ENCODE measurements at regions of chr10 and their contacts with region 1.

Region 1: DNA sequence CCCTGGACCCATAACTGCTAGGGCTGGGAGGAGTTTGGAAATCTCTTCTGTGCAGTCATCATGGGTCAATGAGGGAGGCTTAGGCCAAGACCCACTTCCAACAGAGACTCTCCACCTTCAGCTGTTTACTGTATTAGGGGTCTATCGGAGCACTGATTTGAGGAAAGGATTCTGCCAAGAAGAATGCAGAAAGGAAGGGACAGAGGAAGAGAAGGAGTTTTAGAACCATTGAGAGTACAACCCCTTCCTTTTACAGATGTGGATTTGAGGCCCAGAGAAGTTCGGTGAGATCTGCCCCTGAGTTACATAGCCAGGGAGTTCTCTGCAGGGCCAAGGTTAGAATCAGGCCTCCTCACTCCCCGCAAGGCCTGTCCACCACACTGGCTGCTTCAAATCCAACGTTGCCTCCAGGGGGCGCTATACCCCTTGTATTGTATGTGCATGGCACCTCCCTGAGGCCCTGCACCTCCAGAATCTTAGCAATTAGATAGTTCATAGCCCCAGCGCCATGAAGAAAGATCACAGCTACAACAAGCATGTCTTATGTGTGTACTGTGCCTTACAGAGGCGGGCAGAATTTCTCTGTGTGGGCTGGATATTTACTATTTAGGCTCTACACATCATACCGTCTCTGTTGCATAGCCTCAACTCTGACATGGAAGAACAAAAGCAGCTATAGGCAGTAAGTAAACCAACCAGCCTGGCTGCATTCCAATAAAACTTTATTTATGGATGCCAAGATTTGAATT is 246.8 kb downstream of the SKIDA1 start:
- DNase-seq: peak; percentile 63
- H3K4me3 ChIP-seq: no peak overlapping the region; a peak in 1 of 4 replicates
- H3K27ac ChIP-seq: no peak overlapping the region
- H3K4me1 ChIP-seq: peaks cover 0 to 5% of the 10 kb centered on the region in 2 experiments; a peak in 1 of 4 replicates
- H3K27me3 ChIP-seq: no peaks in the 10 kb centered on the region
- CTCF ChIP-seq: peak; percentile 90
- EP300 ChIP-seq: no peak
- RAD21 ChIP-seq: peak; percentile 91

Region 2: DNA sequence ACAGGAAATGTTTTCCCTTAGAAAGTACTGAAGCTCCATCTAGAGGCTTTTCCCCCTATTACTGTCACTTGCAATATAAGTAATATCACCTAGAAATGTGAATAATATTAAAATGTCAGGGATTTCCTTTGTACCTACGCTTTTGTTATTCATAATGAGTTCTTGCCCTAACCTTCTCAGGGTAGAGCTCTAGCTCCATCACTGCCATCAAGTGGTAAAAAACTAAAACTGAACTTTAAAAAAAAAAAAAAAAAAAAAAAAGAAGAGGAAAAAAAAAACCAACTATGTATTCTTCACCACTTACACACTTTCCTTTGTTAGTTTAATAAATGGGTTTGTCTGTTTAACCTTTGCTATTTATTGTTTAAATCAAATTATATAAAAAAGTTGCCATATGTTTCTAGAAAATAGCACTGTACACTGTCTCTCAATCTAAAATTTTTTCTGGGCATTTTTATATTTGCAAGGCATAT is 675.0 kb after region 1 on chr10:
- CTCF ChIA-PET with region 1: interaction called, 10 read pairs
- POLR2A ChIA-PET with region 1: interaction called, 3 read pairs
- DNase-seq: peak; percentile 54
- H3K4me3 ChIP-seq: no peak overlapping the region; a peak in 1 of 4 replicates
- H3K27ac ChIP-seq: no peak overlapping the region
- H3K4me1 ChIP-seq: peaks cover 0 to 3% of the 10 kb centered on the region in 2 experiments; a peak in 2 of 4 replicates
- H3K27me3 ChIP-seq: no peaks in the 10 kb centered on the region
- CTCF ChIP-seq: peak; percentile 65
- EP300 ChIP-seq: no peak
- RAD21 ChIP-seq: peak; percentile 75